ENCODE measurements at regions of chr11 and their contacts with region 1.

Region 1: DNA sequence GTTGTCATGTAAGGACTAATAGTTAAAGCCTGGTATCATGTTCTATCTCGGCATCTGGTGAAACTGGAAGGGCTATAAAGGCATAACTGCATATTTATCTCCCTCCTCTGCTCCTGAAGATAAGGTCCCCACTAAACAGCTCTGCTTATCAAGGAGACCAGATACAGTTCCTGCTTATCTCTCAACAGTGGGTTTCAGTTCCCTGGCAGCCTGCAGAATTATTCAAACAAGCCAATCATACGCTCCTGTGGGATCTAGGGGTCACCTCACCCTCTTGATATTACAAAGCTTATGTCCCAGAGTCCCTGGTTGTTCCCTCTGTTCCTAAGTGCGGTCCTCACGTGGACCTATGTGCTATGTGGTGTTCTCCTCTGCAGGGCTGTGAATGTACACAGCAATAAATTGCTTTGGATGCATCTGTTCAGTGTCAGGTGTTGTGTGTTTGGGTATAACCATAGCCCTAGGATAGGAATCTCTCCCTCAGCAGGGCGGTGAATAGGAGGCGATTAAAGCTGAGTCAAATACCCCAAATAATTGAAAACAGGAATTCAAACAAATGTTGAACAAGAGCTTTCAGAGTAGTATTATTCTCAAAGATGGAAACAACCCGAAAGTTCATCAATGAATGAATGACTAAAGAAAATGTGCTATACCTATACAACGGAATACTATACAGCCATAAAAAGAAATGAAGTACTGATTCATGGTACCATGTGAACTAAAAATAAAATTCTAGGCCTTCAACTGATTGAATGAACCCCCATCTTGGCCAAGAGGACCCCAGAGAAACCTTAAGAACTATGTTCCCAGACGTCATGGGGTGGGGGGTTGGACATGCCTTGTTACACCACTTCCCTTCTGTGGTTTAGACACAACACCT is 3.1 kb upstream of the OOSP4A start:
- DNase-seq: no peak
- H3K4me3 Mint-ChIP-seq: no peak overlapping the region
- H3K27ac Mint-ChIP-seq: no peak overlapping the region
- H3K4me1 Mint-ChIP-seq: peaks cover 20% of the 10 kb centered on the region
- H3K27me3 Mint-ChIP-seq: no peaks in the 10 kb centered on the region
- CTCF ChIP-seq: no peak

Region 2: DNA sequence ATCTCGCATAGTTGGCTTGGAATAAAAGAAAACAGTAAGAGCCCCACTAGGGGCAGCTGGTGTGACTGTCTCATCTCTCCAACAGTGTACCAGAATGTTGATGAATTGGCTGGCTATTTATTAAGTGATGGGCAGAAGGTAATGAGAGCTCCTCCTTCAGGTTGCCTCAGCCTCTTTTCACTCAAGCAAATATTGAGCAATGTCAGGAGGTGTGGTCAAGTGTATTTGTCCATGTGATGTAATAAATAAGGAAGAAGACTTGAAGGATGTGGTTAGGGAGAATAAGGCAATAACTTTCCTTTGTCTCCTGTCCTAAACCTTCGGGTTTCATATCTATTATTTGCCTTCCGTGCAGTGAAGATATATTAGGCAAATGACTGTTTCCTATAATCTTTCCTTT is 94.3 kb before region 1 on chr11 and contains the start of gene TCN1:
- CTCF ChIA-PET with region 1: no interaction called
- intact Hi-C with region 1: loop called (anchors 5 kb)
- DNase-seq: peak; percentile 71
- H3K4me3 Mint-ChIP-seq: peak within 1 kb of the TSS; percentile 69
- H3K27ac Mint-ChIP-seq: peak within 1 kb of the TSS; percentile 92
- H3K4me1 Mint-ChIP-seq: peaks cover 18% of the 10 kb centered on the region
- H3K27me3 Mint-ChIP-seq: no peaks in the 10 kb centered on the region
- CTCF ChIP-seq: no peak
- total RNA-seq, gene TCN1: 335 and 428 TPM in 2 replicates